ENCODE measurements at regions of chr2 and their contacts with region 1.

Region 1: GRCh38 chr2:169109502-169110409 is 40.4 kb downstream of the DHRS9 start:
- DNase-seq: peak; percentile 83

Region 2: DNA sequence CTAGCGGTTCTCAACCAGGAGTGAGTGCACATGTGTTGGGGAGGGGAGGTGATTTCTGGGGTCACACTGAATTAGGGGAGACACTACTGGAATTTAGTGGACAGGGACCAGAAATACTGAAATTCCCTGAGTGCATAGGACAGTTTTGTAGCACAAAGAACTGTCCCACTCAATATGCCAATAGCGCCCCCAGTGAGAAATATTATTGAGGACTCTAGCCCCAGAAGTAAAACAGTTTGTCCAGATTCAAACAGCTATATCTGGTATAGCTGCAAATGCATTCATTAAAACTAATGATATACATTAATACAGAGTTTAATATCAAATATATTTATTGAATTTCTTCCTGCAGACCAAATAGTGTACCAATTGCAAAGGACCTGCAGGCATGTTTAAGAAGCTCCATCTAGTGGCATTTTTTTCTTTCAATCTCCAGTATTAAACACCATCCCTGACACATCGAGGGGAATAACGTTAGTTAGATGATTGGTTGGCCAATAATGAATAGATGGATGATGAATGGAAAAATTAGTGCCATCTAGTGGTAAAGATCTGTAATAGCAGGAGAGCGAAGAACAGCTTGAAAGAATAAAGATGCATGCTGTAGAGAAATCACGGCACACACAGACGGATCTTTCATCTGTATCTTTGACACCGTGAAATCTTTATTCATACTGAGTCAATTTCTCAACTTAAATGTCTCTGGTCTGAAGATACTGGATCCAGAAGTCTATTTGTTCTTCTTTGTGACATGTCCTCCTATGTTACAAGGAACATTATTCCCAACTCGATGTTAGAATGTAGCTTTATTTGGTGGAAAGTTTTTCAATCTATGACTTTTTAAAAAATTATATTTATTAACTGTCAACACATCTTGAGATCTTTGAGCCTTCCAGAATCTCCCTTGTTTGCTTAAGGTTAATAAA is 22.1 kb after region 1 on chr2:
- CTCF ChIA-PET with region 1: interaction called, 10 read pairs
- POLR2A ChIA-PET with region 1: no interaction called
- DNase-seq: peak; percentile 57

Measured in HEK293T (cell line).